Caco-2 (cell line): ENCODE measurements at regions of chr1 and their contacts with region 1.

Region 1: GRCh38 chr1:21963477-21964217 is 13.2 kb upstream of the CELA3B start:
- DNase-seq: peak; percentile 77 to 86
- H3K4me3 ChIP-seq: no peak overlapping the region
- H3K4me3 Mint-ChIP-seq: no peak overlapping the region
- H3K27ac Mint-ChIP-seq: peak overlapping the region; percentile 58
- H3K4me1 ChIP-seq: peaks cover 4% of the 10 kb centered on the region; the same call in 1 of the 2 replicates
- H3K4me1 Mint-ChIP-seq: peaks cover 11% of the 10 kb centered on the region
- H3K27me3 ChIP-seq: no peaks in the 10 kb centered on the region
- H3K27me3 Mint-ChIP-seq: no peaks in the 10 kb centered on the region
- CTCF ChIP-seq: peak; percentile 72 to 90

Region 2: DNA sequence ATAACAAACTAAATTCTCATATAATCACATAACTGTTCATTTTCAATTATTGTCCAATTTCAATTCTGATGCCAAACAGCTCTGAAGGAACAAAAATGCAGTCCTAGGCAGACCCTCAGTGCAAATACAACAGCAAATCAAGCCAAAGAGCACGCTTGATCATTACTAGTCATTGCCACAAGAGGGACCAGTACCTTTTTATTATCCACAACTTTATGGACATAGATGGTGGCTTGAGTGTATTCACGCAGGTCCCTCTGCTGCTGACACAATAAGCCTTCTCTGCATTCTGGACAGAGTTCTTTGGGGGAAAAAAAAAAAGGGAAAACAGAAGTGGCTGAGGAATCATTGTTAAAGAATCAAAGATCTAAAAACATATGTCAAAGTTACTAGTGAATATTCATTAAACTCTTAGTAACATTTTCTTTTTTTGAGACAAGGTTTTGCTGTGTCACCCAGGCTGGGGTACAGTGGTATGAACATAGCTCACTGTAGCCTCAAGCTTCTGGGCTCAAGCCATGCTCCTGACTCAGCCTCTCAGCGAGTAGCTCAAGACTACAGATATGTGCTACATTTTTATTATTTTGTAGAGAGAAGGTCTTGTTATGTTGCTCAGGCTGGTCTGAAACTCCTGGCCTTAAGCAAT is 260.2 kb before region 1 on chr1:
- CTCF ChIA-PET with region 1: no interaction called
- POLR2A ChIA-PET with region 1: no interaction called
- intact Hi-C with region 1: loop called (anchors 2 kb)
- DNase-seq: peak in 1 of 2 experiments; percentile 29
- H3K4me3 ChIP-seq: no peak overlapping the region
- H3K4me3 Mint-ChIP-seq: no peak overlapping the region
- H3K27ac Mint-ChIP-seq: peak overlapping the region; percentile 3
- H3K4me1 ChIP-seq: no peaks in the 10 kb centered on the region
- H3K4me1 Mint-ChIP-seq: peaks cover 14% of the 10 kb centered on the region
- H3K27me3 ChIP-seq: no peaks in the 10 kb centered on the region
- H3K27me3 Mint-ChIP-seq: no peaks in the 10 kb centered on the region
- CTCF ChIP-seq: peak; percentile 47 to 53

Region 3: DNA sequence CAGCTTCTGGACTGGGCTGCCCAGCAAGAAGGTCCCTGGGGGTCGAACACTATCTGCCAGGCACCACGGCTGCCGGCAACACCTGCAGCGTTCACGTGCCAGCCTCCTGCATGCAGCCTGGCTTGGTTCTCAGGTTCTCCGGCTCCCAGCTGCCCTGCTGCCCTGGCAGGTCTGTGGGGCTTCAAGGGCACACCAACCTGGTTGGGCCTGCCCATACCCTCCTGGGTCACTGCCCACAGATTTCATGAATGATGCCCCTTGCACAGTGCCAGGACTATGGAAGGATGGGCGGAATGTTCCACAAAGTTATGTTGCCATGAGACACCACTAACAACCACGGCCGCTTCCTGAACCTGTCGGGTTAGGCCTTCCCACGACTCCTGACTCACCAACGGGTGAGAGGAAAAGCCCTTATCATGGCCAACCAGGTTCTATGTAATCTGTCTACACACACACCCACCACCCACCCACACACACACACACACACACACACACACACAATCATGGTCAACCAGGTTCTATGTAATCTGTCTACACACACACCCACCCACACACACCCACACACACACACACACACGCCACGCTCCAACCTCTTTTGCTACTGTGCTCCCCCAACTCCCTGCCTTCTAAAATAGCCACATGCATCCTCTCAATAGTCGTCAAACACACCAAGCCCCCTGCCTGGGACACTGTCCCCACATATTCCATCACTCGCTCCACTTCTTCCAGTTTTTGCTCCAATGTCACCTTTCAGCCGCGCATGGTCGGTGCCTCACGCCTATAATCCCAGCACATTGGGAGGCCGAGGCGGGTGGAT is 58.7 kb before region 1 on chr1:
- CTCF ChIA-PET with region 1: no interaction called
- POLR2A ChIA-PET with region 1: no interaction called
- intact Hi-C with region 1: loop called (anchors 2 kb)
- DNase-seq: peak in 1 of 2 experiments; percentile 49
- H3K4me3 ChIP-seq: no peak overlapping the region
- H3K4me3 Mint-ChIP-seq: no peak overlapping the region
- H3K27ac Mint-ChIP-seq: peak overlapping the region; percentile 82
- H3K4me1 ChIP-seq: peaks cover 50% of the 10 kb centered on the region
- H3K4me1 Mint-ChIP-seq: peaks cover 44% of the 10 kb centered on the region
- H3K27me3 ChIP-seq: no peaks in the 10 kb centered on the region
- H3K27me3 Mint-ChIP-seq: no peaks in the 10 kb centered on the region
- CTCF ChIP-seq: no peak

Region 4: GRCh38 chr1:21924503-21925005 is 39.1 kb before region 1 on chr1:
- CTCF ChIA-PET with region 1: no interaction called
- POLR2A ChIA-PET with region 1: no interaction called
- intact Hi-C with region 1: loop called (anchors 5 kb)
- DNase-seq: no peak
- H3K4me3 ChIP-seq: no peak overlapping the region
- H3K4me3 Mint-ChIP-seq: no peak overlapping the region
- H3K27ac Mint-ChIP-seq: peak overlapping the region; percentile 95
- H3K4me1 ChIP-seq: peaks cover 95% of the 10 kb centered on the region
- H3K4me1 Mint-ChIP-seq: peaks cover 49% of the 10 kb centered on the region
- H3K27me3 ChIP-seq: no peaks in the 10 kb centered on the region
- H3K27me3 Mint-ChIP-seq: no peaks in the 10 kb centered on the region
- CTCF ChIP-seq: no peak

Region 5: GRCh38 chr1:22289307-22289995 is 325.8 kb after region 1 on chr1:
- CTCF ChIA-PET with region 1: no interaction called
- POLR2A ChIA-PET with region 1: no interaction called
- intact Hi-C with region 1: no loop called
- DNase-seq: no peak
- H3K4me3 ChIP-seq: no peak overlapping the region
- H3K4me3 Mint-ChIP-seq: no peak overlapping the region
- H3K27ac Mint-ChIP-seq: peak overlapping the region; percentile 48
- H3K4me1 ChIP-seq: peaks cover 12% of the 10 kb centered on the region
- H3K4me1 Mint-ChIP-seq: peaks cover 20% of the 10 kb centered on the region
- H3K27me3 ChIP-seq: no peaks in the 10 kb centered on the region
- H3K27me3 Mint-ChIP-seq: no peaks in the 10 kb centered on the region
- CTCF ChIP-seq: no peak